ENCODE measurements at regions of chr6 and their contacts with region 1.

Region 1: GRCh38 chr6:2988426-2989331 is 11.0 kb upstream of the NQO2 start:
- DNase-seq: peak; percentile 77 to 89
- ATAC-seq: peak; percentile 76 to 90 (median 82)
- H3K4me3 ChIP-seq: peak overlapping the region; percentile 79
- H3K4me3 Mint-ChIP-seq: peak overlapping the region; percentile 96
- H3K27ac ChIP-seq: peak overlapping the region; percentile 96
- H3K27ac Mint-ChIP-seq: peak overlapping the region; percentile 95 to 99
- H3K4me1 ChIP-seq: peaks cover 25% of the 10 kb centered on the region
- H3K4me1 Mint-ChIP-seq: peaks cover 26 to 34% of the 10 kb centered on the region in 2 donors
- H3K27me3 ChIP-seq: no peaks in the 10 kb centered on the region
- H3K27me3 Mint-ChIP-seq: no peaks in the 10 kb centered on the region
- CTCF ChIP-seq: peak; percentile 86

Region 2: GRCh38 chr6:2706558-2706957 is 282.1 kb before region 1 on chr6:
- intact Hi-C with region 1: no loop called
- DNase-seq: no peak
- ATAC-seq: peak in 1 of 3 donors; percentile 25
- H3K4me3 ChIP-seq: no peak overlapping the region
- H3K4me3 Mint-ChIP-seq: no peak overlapping the region
- H3K27ac ChIP-seq: no peak overlapping the region
- H3K27ac Mint-ChIP-seq: no peak overlapping the region
- H3K4me1 ChIP-seq: no peaks in the 10 kb centered on the region
- H3K4me1 Mint-ChIP-seq: no peaks in the 10 kb centered on the region
- H3K27me3 ChIP-seq: no peaks in the 10 kb centered on the region
- H3K27me3 Mint-ChIP-seq: peaks cover 3 to 13% of the 10 kb centered on the region in 2 donors
- CTCF ChIP-seq: no peak

Region 3: DNA sequence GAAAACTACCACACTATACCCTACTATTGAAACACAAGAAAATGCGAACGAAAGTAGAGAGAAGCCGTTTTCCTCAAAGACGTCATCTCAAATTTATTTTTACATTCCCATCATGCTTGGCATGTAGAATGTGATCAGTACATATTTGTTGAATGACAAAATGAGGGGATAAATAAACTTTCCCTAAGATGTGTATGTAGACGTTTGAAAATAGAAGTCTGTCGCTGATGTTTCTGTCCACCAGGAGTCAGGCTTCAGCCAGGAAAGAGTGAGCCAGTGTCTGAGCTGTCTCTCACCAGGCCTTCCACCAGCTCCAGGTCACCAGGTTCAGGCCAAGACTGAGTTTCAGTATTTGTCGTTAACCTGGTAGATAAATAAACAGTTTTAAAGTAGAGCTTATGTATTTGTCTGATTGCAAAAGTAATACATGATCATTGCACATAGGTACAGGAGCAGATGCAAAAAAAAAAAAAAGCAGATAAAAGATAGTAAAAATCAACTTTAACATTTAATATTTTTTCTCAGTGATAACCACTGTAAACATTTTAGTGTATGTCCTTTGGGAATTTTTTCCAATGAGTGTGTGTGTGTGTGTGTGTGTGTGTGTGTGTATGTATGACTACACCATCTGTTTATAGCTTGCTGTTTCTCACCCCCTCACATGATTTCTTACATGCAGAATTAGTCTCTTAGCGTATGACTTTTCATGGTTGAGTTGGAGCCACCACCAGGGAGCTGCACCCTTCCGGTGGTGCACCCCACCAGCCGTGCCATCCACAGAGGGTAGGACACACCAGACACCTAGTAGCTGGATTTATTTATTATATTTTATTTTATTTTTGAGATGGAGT is 197.3 kb before region 1 on chr6:
- intact Hi-C with region 1: loop called (anchors 1 kb)
- DNase-seq: peak; percentile 46 to 75
- ATAC-seq: peak; percentile 71 to 81 (median 76)
- H3K4me3 ChIP-seq: no peak overlapping the region
- H3K4me3 Mint-ChIP-seq: peak overlapping the region; percentile 85
- H3K27ac ChIP-seq: peak overlapping the region; percentile 17
- H3K27ac Mint-ChIP-seq: peak overlapping the region; percentile 93 to 94
- H3K4me1 ChIP-seq: peaks cover 51% of the 10 kb centered on the region
- H3K4me1 Mint-ChIP-seq: peaks cover 47 to 49% of the 10 kb centered on the region in 2 donors
- H3K27me3 ChIP-seq: no peaks in the 10 kb centered on the region
- H3K27me3 Mint-ChIP-seq: no peaks in the 10 kb centered on the region
- CTCF ChIP-seq: peak; percentile 79

Region 4: DNA sequence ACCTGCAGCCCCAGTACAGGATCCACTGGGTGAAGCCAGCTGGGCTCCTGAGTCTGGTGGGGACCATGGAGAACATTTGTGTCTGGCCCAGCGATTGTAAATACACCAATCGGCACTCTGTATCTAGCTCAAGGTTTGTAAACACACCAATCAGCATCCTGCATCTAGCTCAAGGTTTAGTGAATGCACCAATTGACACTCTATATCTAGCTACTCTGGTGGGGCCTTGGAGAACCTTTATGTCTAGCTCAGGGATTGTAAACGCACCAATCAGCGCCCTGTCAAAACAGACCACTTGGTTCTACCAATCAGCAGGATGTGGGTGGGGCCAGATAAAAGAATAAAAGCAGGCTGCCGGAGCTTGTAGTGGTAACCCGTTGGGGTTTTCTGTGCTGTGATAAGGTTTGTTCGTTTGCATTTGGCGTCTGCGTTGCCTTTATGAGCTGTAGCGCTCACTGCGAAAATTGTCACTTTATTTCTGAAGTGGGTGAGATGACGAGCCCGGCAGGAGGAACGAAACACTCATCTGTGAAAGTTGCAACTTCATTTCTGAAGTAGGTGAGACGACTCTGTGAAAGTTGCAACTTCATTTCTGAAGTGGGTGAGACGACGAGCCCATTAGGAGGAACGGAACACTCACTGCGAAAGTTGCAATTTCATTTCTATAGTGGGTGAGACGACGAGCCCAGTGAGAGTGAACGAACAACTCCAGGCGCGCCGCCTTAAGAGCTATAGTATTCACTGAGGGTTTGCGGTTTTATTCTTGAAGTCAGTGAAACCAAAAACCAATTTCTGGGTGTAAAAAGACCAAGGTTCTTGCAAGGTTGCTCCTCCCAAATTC is 48.4 kb before region 1 on chr6:
- intact Hi-C with region 1: loop called (anchors 1 kb)
- DNase-seq: peak; percentile 64 to 89
- ATAC-seq: peak; percentile 81 to 89 (median 81)
- H3K4me3 ChIP-seq: peak overlapping the region; percentile 16
- H3K4me3 Mint-ChIP-seq: peak overlapping the region; percentile 81
- H3K27ac ChIP-seq: peak overlapping the region; percentile 66
- H3K27ac Mint-ChIP-seq: peak overlapping the region; percentile 94 to 96
- H3K4me1 ChIP-seq: peaks cover 67% of the 10 kb centered on the region
- H3K4me1 Mint-ChIP-seq: peaks cover 59 to 66% of the 10 kb centered on the region in 2 donors
- H3K27me3 ChIP-seq: no peaks in the 10 kb centered on the region
- H3K27me3 Mint-ChIP-seq: no peaks in the 10 kb centered on the region
- CTCF ChIP-seq: no peak

Region 5: GRCh38 chr6:2971420-2972218 is 17.1 kb before region 1 on chr6 and contains the start of gene SERPINB6:
- intact Hi-C with region 1: loop called (anchors 2 kb)
- DNase-seq: peak; percentile 48 to 67
- ATAC-seq: peak; percentile 54 to 67 (median 62)
- H3K4me3 ChIP-seq: peak within 1 kb of the TSS; percentile 60
- H3K4me3 Mint-ChIP-seq: peak within 1 kb of the TSS; percentile 90
- H3K27ac ChIP-seq: peak within 1 kb of the TSS; percentile 77
- H3K27ac Mint-ChIP-seq: peak within 1 kb of the TSS; percentile 87 to 91
- H3K4me1 ChIP-seq: peaks cover 26% of the 10 kb centered on the region
- H3K4me1 Mint-ChIP-seq: peaks cover 62 to 72% of the 10 kb centered on the region in 2 donors
- H3K27me3 ChIP-seq: no peaks in the 10 kb centered on the region
- H3K27me3 Mint-ChIP-seq: no peaks in the 10 kb centered on the region
- CTCF ChIP-seq: no peak
- total RNA-seq, gene SERPINB6: 120 to 135 (median 129) TPM